Mammary epithelial cell (primary cell): ENCODE measurements at regions of chr17 and their contacts with region 1.

Region 1: GRCh38 chr17:82205719-82206508 is 6.7 kb downstream of the CCDC57 start:
- DNase-seq: peak; percentile 98
- H3K4me3 ChIP-seq: peak overlapping the region; percentile 1 to 26 (median 18)
- H3K27ac ChIP-seq: peak overlapping the region; percentile 92
- H3K4me1 ChIP-seq: peaks cover 26% of the 10 kb centered on the region
- H3K27me3 ChIP-seq: no peaks in the 10 kb centered on the region
- CTCF ChIP-seq: peak; percentile 82 to 94

Region 2: GRCh38 chr17:82037113-82037888 is 168.6 kb before region 1 on chr17 and contains the start of gene DCXR:
- CTCF ChIA-PET with region 1: no interaction called
- dilution Hi-C with region 1: loop called (anchors 5 kb)
- in situ Hi-C with region 1: no loop called
- intact Hi-C with region 1: no loop called
- DNase-seq: peak; percentile 96
- H3K4me3 ChIP-seq: peak within 1 kb of the TSS; percentile 68 to 84 (median 73)
- H3K27ac ChIP-seq: peak within 1 kb of the TSS; percentile 31
- H3K4me1 ChIP-seq: peaks cover 16% of the 10 kb centered on the region
- H3K27me3 ChIP-seq: no peaks in the 10 kb centered on the region
- CTCF ChIP-seq: peak; percentile 50 to 80
- total RNA-seq, gene DCXR: 27.7 to 68.9 TPM

Region 3: DNA sequence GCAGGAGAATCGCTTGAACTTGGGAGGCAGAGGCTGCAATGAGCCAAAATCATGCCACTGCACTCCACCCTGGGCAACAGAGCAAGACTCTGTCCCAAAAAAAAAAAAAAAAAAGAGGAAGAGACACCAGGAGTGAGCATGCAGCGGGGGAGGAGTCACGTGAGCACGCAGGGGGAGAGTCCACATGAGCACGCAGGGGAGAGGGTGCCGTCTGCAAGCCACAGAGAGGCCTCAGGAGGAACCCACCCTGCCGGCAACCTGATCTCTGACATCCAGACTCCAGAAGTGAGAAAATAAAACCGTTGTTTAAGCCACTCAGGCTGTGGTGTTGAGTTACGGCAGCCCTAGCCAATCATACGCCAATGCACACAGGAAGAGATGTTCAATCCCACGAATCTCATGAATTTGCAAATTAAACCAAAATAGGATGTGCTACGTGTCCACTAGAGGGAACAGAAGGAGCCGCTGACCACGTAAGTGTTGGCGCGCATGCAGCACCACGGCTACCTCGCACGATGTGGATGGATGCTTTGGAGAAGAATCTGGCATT is 35.4 kb before region 1 on chr17:
- CTCF ChIA-PET with region 1: no interaction called
- dilution Hi-C with region 1: loop called (anchors 5 kb)
- in situ Hi-C with region 1: no loop called
- intact Hi-C with region 1: no loop called
- DNase-seq: no peak
- H3K4me3 ChIP-seq: no peak overlapping the region
- H3K27ac ChIP-seq: no peak overlapping the region
- H3K4me1 ChIP-seq: no peaks in the 10 kb centered on the region
- H3K27me3 ChIP-seq: no peaks in the 10 kb centered on the region
- CTCF ChIP-seq: no peak

Region 4: GRCh38 chr17:82281502-82282238 is 75.8 kb after region 1 on chr17:
- CTCF ChIA-PET with region 1: no interaction called
- dilution Hi-C with region 1: loop called (anchors 5 kb)
- in situ Hi-C with region 1: no loop called
- intact Hi-C with region 1: no loop called
- DNase-seq: peak; percentile 92
- H3K4me3 ChIP-seq: no peak overlapping the region
- H3K27ac ChIP-seq: peak overlapping the region; percentile 65
- H3K4me1 ChIP-seq: peaks cover 42% of the 10 kb centered on the region
- H3K27me3 ChIP-seq: no peaks in the 10 kb centered on the region
- CTCF ChIP-seq: no peak

Region 5: DNA sequence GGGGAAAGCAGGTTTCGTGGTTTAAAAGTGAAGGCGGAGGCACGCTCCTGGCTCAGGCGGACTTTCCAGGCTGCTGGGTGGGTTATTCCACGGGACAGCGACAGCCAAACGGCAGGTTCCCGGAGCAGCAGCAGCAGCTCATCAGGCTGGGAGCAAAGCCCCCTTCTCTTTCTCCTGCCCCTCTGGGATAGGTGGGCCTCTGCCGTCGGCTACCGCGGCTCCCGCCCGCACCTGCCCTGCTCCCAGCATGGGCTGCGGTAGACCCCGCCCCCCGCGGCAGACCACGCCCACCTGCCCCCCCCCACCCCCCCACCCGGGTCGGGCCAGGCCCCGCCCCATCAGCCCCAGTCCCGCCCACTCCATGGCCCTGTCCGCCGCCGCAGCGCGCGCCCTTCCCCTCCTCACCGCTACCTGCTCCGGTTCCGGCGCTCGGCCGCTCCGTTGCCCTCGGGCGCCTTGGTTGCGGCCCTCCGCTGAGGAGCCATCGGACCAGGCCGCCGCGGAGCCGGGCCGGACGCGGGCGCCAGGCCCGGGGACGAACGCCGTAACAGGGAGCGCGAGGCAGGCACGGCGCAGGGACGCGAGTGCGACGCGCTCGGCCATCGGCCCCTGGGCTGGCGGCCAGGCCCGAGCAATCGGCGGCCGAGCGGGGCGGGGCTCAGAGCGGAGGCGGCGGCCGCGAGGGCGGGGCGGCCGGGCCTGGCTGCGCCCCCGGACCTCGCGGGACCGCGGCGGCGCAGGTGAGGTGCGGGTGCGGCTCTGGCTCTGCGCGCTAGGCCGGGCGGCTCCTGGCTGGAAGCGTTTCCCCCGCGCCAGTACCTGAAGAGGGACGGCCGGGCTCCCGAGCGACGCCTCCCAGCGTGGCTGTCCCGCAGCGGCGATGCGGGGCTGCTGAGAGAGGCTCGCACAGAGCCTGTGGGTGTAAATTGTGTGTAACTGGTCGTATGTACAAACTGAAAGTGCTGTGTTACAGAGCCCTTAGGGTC is 212.4 kb after region 1 on chr17 and contains the starts of genes HEXD and OGFOD3:
- CTCF ChIA-PET with region 1: no interaction called
- dilution Hi-C with region 1: loop called (anchors 5 kb)
- in situ Hi-C with region 1: no loop called
- intact Hi-C with region 1: loop called (anchors 1 kb)
- DNase-seq: peak; percentile 89
- H3K4me3 ChIP-seq: peak within 1 kb of the TSS; percentile 88 to 97 (median 88)
- H3K27ac ChIP-seq: peak within 1 kb of the TSS; percentile 71
- H3K4me1 ChIP-seq: peaks cover 13% of the 10 kb centered on the region
- H3K27me3 ChIP-seq: no peaks in the 10 kb centered on the region
- CTCF ChIP-seq: no peak
- total RNA-seq, gene HEXD: 6.3 to 13.0 TPM
- total RNA-seq, gene OGFOD3: 18.5 to 25.6 TPM